ENCODE measurements at regions of chr10 and their contacts with region 1.

Region 1: DNA sequence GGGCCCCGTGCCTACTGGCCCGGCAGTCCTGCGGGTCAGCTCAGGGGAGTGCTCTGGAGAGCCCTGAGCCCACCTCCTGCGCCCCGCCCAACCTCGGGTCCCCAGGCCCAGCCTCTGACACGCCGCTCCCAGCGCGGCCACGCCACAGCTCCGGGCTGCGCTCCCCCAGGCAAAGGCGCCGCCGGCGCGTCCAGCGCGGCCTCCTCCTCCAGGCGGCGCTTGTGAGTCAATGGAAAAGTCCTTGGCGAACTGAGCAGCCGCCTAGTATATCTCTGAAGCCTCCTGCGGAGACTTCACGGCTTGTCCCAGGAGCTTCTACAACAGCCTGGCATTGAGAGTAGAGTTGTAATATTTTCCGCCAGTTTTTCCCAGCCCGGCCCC is 29.5 kb upstream of the BMS1 start:
- DNase-seq: peak; percentile 56
- ATAC-seq: peak; percentile 96
- H3K4me3 ChIP-seq: peak overlapping the region; percentile 54 to 70
- H3K27ac ChIP-seq: peak overlapping the region; percentile 20; the same call in 1 of the 2 replicates
- H3K4me1 ChIP-seq: peaks cover 3% of the 10 kb centered on the region; the same call in 1 of the 2 replicates
- H3K27me3 ChIP-seq: no peaks in the 10 kb centered on the region; the same call in none of the 2 replicates
- CTCF ChIP-seq: peak; percentile 99

Region 2: DNA sequence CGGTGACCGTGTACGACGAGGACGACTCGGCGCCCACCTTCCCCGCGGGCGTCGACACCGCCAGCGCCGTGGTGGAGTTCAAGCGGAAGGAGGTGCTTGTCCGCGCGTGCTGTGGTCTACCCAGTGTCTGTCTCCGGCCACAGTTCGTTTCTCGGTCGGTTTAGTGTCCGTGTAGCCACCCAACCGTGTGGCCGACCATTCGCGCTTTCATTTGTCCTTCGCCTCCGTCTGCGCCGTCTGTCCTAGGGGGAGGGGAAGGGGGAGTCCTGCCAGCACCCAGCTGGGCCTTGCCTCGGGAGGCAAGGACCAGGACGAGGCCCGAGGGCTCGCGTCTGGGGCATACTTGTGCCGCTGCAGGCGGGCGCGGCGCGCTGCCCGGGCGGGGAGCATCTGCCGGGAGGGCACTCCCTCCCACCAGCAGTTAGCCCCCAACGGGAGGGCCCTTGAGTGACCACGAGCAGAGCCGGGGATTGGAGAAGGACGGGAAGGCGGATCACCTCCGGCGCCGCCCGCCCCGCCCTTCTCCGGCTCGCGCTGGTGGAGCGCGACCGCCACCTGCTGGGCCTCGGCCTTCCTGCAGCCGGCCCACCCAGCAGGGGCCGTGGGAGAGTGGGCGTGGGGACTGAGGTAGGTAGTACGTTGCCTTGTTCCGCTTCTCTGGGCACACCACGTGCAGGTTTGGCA is 352.1 kb after region 1 on chr10:
- CTCF ChIA-PET with region 1: no interaction called
- POLR2A ChIA-PET with region 1: no interaction called
- in situ Hi-C with region 1: no loop called
- intact Hi-C with region 1: loop called (anchors 5 kb)
- DNase-seq: peak; percentile 45
- ATAC-seq: peak; percentile 91
- H3K4me3 ChIP-seq: peak overlapping the region; percentile 55 to 68
- H3K27ac ChIP-seq: peak overlapping the region; percentile 75
- H3K4me1 ChIP-seq: peaks cover 16% of the 10 kb centered on the region
- H3K27me3 ChIP-seq: no peaks in the 10 kb centered on the region
- CTCF ChIP-seq: peak; percentile 100

Measured in Panc1 (cell line).